ENCODE measurements at regions of chr17 and their contacts with region 1.

Region 1: DNA sequence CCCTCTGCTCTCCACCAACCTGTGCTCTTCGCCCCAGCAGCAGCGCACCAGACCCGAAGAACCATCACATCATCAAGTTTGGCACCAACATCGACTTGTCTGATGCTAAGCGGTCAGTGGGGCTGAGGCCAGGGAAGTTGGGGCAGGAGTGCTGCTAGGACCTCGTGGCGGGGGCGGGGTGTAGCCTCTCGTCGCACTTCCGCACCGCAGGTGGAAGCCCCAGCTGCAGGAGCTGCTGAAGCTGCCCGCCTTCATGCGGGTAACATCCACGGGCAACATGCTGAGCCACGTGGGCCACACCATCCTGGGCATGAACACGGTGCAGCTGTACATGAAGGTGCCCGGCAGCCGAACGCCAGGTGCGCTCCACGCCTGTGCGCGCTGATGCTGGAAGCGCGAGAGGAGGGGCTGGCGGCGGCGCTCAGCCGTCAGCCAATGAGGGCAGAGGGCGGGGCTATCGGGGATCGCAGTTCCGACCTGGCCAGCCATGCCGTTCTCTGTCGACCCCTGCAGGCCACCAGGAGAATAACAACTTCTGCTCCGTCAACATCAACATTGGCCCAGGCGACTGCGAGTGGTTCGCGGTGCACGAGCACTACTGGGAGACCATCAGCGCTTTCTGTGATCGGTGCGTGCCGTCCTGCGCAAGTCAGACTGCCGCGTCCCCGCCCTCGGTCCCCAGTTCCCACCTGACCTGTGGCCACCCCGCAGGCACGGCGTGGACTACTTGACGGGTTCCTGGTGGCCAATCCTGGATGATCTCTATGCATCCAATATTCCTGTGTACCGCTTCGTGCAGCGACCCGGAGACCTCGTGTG is 3.2 kb upstream of the TMEM88 start:
- DNase-seq: peak; percentile 96
- ATAC-seq: peak; percentile 92
- H3K4me3 Mint-ChIP-seq: peak overlapping the region; percentile 82
- H3K27ac Mint-ChIP-seq: peak overlapping the region; percentile 67
- H3K4me1 Mint-ChIP-seq: peaks cover 28% of the 10 kb centered on the region
- H3K27me3 Mint-ChIP-seq: no peaks in the 10 kb centered on the region

Region 2: GRCh38 chr17:7825206-7825990 is 26.2 kb before region 1 on chr17:
- CTCF ChIA-PET with region 1: interaction called, 11 read pairs
- POLR2A ChIA-PET with region 1: no interaction called
- DNase-seq: no peak
- ATAC-seq: no peak
- H3K4me3 Mint-ChIP-seq: no peak overlapping the region
- H3K27ac Mint-ChIP-seq: no peak overlapping the region
- H3K4me1 Mint-ChIP-seq: no peaks in the 10 kb centered on the region
- H3K27me3 Mint-ChIP-seq: peaks cover 18% of the 10 kb centered on the region

Region 3: DNA sequence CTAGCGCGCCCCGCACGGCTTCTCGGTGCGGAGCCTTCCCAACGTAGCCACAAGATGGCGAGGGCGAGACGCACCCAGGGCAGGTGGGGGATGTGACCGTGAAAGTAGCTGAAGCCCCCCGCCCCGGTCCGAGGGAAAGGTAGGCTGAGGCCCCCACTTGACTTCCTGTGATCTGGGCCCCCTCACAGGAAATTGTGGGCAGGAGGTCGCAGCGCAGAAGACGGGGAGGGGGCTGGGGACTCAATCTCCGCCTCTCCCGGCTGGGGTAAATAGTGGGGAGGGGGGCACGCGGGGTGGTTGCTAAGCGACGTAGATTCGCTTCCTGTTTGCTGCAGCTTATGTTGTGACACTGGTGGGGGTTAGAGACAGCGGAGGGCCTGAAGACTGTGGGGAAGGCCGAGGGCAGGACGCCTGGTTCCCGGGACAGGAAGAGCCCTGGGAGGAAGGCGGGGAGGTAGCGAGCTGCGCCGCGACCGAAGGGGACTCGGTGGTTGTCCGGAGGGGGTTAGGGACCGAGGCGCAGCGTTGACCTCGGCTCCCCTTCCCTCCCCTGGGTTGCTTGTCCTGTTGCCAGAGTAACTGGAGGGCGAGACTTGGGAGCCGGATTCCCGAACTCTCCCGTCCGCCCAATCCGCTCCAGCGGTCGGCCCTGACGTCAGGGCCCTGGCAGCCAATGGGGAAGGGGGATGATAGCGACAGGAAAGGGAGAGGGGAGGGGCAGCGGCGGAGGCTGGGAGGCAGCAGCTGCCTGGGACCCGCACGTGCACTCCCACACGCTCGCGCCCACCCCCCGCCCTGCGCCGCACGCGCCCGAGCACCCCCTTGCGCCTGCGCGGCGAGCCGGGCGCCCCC is 16.5 kb before region 1 on chr17:
- CTCF ChIA-PET with region 1: interaction called, 50 read pairs
- POLR2A ChIA-PET with region 1: interaction called, 20 read pairs
- DNase-seq: peak; percentile 91
- ATAC-seq: peak; percentile 56
- H3K4me3 Mint-ChIP-seq: peak overlapping the region; percentile 90
- H3K27ac Mint-ChIP-seq: peak overlapping the region; percentile 94
- H3K4me1 Mint-ChIP-seq: peaks cover 55% of the 10 kb centered on the region
- H3K27me3 Mint-ChIP-seq: peaks cover 8% of the 10 kb centered on the region

Measured in activated CD8-positive, alpha-beta T cell treated with anti-CD3 and anti-CD28 coated beads, Interleukin-2, amount 10 ng/mL, durations not matched to agents 7 days and 5 days (primary cell).